BJ (cell line): ENCODE measurements at regions of chr6 and their contacts with region 1.

Region 1: DNA sequence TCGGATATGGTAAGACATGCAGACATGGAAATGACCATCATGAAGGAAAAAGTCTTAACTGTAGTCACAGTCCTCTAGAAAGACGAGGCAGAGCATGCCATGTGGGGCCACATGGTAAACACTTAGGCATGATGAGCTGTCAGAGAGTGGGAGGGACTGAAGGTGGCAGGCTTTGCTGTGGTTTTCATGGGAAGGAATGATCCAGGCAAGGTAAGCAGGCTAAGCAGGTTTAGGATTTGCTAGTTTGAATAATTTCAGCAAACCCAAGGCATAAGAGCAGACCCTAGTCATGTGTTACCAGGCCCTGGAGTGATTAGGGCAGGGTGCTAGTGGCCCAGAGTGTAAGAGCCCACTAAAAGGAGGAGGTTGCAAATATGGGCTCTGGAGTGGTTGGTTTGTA is 47.2 kb upstream of the STMND1 start:
- DNase-seq: no peak
- H3K4me3 ChIP-seq: no peak overlapping the region
- H3K27me3 ChIP-seq: no peaks in the 10 kb centered on the region
- CTCF ChIP-seq: no peak

Region 2: DNA sequence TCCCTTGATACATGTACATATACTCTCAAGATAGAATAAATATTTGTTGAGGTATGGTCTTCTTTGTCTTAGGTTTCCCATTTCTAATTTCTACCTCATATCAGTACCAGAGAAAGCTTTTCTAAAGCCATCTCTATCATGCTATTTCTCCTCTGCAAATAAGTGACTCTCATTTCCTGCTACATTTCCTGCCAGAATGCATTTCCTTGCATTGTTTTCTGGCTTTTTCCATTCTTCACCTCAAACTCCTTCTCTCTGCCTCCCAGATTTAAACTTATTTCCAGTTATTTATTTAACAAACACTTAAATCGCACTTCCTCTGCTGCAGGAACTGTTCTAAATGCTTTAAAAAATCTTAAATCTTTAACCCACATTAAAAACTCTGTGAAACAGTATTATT is 27.2 kb before region 1 on chr6:
- CTCF ChIA-PET with region 1: no interaction called
- POLR2A ChIA-PET with region 1: interaction called, 12 read pairs
- DNase-seq: no peak
- H3K4me3 ChIP-seq: no peak overlapping the region
- H3K27me3 ChIP-seq: no peaks in the 10 kb centered on the region
- CTCF ChIP-seq: no peak

Region 3: GRCh38 chr6:17493286-17493685 is 438.6 kb after region 1 on chr6:
- CTCF ChIA-PET with region 1: no interaction called
- POLR2A ChIA-PET with region 1: no interaction called
- DNase-seq: no peak
- H3K4me3 ChIP-seq: no peak overlapping the region
- H3K27me3 ChIP-seq: no peaks in the 10 kb centered on the region
- CTCF ChIP-seq: no peak